CD4-positive, alpha-beta T cell (primary cell): ENCODE measurements at regions of chr1 and their contacts with region 1.

Region 1: GRCh38 chr1:111197598-111198284 is 2.7 kb downstream of the DENND2D start:
- DNase-seq: peak in 13 of 14 experiments; percentile 49 to 91 (median 73)
- ATAC-seq: no peak
- H3K4me3 ChIP-seq: peak overlapping the region; percentile 79
- H3K4me3 Mint-ChIP-seq: peak overlapping the region; percentile 99
- H3K27ac ChIP-seq: peak overlapping the region; percentile 70 to 97
- H3K27ac Mint-ChIP-seq: peak overlapping the region; percentile 90
- H3K4me1 ChIP-seq: peaks cover 86% of the 10 kb centered on the region
- H3K4me1 Mint-ChIP-seq: peaks cover 88% of the 10 kb centered on the region
- H3K27me3 ChIP-seq: no peaks in the 10 kb centered on the region
- H3K27me3 Mint-ChIP-seq: no peaks in the 10 kb centered on the region
- CTCF ChIP-seq: no peak

Region 2: DNA sequence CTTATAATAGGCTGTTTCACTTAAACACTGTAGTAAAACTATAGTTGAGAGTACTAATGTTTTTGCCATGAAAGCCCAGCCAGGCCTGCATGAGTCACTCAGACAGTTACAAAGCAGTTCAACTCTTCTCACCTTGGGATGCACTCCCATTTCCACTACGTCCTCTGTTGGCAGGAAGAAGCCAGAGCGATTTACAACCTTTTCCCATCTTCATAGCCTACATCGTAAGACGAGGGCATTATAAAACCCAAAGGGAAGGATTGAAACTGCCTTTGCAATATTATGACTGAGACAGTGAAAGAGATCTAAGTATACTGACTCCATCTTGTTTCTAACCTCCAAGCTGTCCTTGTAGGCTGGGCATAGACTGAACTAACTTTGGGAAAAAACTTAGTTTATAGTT is 1358.9 kb before region 1 on chr1:
- CTCF ChIA-PET with region 1: no interaction called
- POLR2A ChIA-PET with region 1: no interaction called
- intact Hi-C with region 1: no loop called
- DNase-seq: no peak
- ATAC-seq: no peak
- H3K4me3 ChIP-seq: no peak overlapping the region
- H3K4me3 Mint-ChIP-seq: no peak overlapping the region
- H3K27ac ChIP-seq: no peak overlapping the region
- H3K27ac Mint-ChIP-seq: no peak overlapping the region
- H3K4me1 ChIP-seq: no peaks in the 10 kb centered on the region
- H3K4me1 Mint-ChIP-seq: no peaks in the 10 kb centered on the region
- H3K27me3 ChIP-seq: no peaks in the 10 kb centered on the region
- H3K27me3 Mint-ChIP-seq: no peaks in the 10 kb centered on the region
- CTCF ChIP-seq: no peak

Region 3: GRCh38 chr1:110850636-110851035 is 347.1 kb before region 1 on chr1:
- CTCF ChIA-PET with region 1: no interaction called
- POLR2A ChIA-PET with region 1: no interaction called
- intact Hi-C with region 1: no loop called
- DNase-seq: no peak
- ATAC-seq: no peak
- H3K4me3 ChIP-seq: no peak overlapping the region
- H3K4me3 Mint-ChIP-seq: no peak overlapping the region
- H3K27ac ChIP-seq: no peak overlapping the region
- H3K27ac Mint-ChIP-seq: no peak overlapping the region
- H3K4me1 ChIP-seq: no peaks in the 10 kb centered on the region
- H3K4me1 Mint-ChIP-seq: no peaks in the 10 kb centered on the region
- H3K27me3 ChIP-seq: no peaks in the 10 kb centered on the region
- H3K27me3 Mint-ChIP-seq: peaks cover 7% of the 10 kb centered on the region
- CTCF ChIP-seq: no peak

Region 4: GRCh38 chr1:111183308-111184069 is 14.3 kb before region 1 on chr1:
- CTCF ChIA-PET with region 1: interaction called, 4 read pairs
- POLR2A ChIA-PET with region 1: interaction called, 106 read pairs
- intact Hi-C with region 1: no loop called
- DNase-seq: no peak
- ATAC-seq: no peak
- H3K4me3 ChIP-seq: no peak overlapping the region
- H3K4me3 Mint-ChIP-seq: no peak overlapping the region
- H3K27ac ChIP-seq: no peak overlapping the region
- H3K27ac Mint-ChIP-seq: peak overlapping the region; percentile 86
- H3K4me1 ChIP-seq: peaks cover 19% of the 10 kb centered on the region
- H3K4me1 Mint-ChIP-seq: peaks cover 94% of the 10 kb centered on the region
- H3K27me3 ChIP-seq: no peaks in the 10 kb centered on the region
- H3K27me3 Mint-ChIP-seq: no peaks in the 10 kb centered on the region
- CTCF ChIP-seq: no peak

Region 5: DNA sequence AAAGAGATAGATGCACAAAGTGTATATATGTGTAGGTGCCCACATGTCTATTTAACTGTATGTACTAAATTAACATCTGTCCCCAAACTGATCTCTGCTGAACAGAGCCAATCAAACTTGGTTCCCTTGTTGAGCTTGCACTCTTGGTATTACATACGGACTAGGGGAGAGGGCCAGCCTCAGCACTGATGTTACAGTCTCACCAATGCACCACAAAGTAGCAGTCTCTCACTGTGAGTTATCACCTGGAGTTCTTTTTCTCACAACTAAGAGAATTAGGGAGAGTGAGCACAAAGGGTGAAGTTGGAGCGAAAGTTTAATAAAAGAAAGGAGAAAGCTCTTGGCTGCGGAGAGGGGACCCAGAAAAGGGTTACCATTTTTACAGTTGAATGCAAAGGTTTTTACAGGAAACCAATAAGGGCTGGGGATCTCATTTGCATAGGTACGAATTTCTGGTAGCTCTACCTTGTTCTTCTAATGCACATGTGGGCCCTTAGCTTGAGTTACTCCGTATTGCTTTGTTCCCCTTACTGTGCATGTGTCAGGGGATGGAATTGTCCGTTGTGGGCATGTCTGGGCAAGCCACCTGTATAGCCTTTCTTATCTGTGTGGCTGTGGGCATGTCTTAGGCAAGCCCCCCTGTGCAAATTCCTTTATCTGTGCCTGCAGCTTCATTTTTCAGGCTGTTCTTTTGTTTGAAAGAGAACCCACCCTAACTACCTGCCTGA is 16.5 kb after region 1 on chr1:
- CTCF ChIA-PET with region 1: interaction called, 135 read pairs
- POLR2A ChIA-PET with region 1: interaction called, 756 read pairs
- intact Hi-C with region 1: loop called in 1 of 2 experiments (anchors 1 kb)
- DNase-seq: peak in 1 of 14 experiments; percentile 12
- ATAC-seq: no peak
- H3K4me3 ChIP-seq: no peak overlapping the region
- H3K4me3 Mint-ChIP-seq: peak overlapping the region; percentile 80
- H3K27ac ChIP-seq: peak overlapping the region; percentile 76 to 88
- H3K27ac Mint-ChIP-seq: peak overlapping the region; percentile 98
- H3K4me1 ChIP-seq: peaks cover 69% of the 10 kb centered on the region
- H3K4me1 Mint-ChIP-seq: peaks cover 94% of the 10 kb centered on the region
- H3K27me3 ChIP-seq: no peaks in the 10 kb centered on the region
- H3K27me3 Mint-ChIP-seq: peaks cover 5% of the 10 kb centered on the region
- CTCF ChIP-seq: no peak

Region 6: GRCh38 chr1:111234866-111235265 is 37.1 kb after region 1 on chr1:
- CTCF ChIA-PET with region 1: no interaction called
- POLR2A ChIA-PET with region 1: interaction called, 756 read pairs
- intact Hi-C with region 1: loop called in 1 of 2 experiments (anchors 5 kb)
- DNase-seq: no peak
- ATAC-seq: no peak
- H3K4me3 ChIP-seq: no peak overlapping the region
- H3K4me3 Mint-ChIP-seq: no peak overlapping the region
- H3K27ac ChIP-seq: no peak overlapping the region
- H3K27ac Mint-ChIP-seq: no peak overlapping the region
- H3K4me1 ChIP-seq: peaks cover 13% of the 10 kb centered on the region
- H3K4me1 Mint-ChIP-seq: peaks cover 70% of the 10 kb centered on the region
- H3K27me3 ChIP-seq: no peaks in the 10 kb centered on the region
- H3K27me3 Mint-ChIP-seq: no peaks in the 10 kb centered on the region
- CTCF ChIP-seq: no peak

Region 7: GRCh38 chr1:111334169-111334568 is 136.4 kb after region 1 on chr1:
- CTCF ChIA-PET with region 1: interaction called, 13 read pairs
- POLR2A ChIA-PET with region 1: no interaction called
- intact Hi-C with region 1: no loop called
- DNase-seq: peak; percentile 37 to 85 (median 52)
- ATAC-seq: peak; percentile 95
- H3K4me3 ChIP-seq: no peak overlapping the region
- H3K4me3 Mint-ChIP-seq: no peak overlapping the region
- H3K27ac ChIP-seq: no peak overlapping the region
- H3K27ac Mint-ChIP-seq: no peak overlapping the region
- H3K4me1 ChIP-seq: peaks cover 8% of the 10 kb centered on the region
- H3K4me1 Mint-ChIP-seq: peaks cover 6% of the 10 kb centered on the region
- H3K27me3 ChIP-seq: no peaks in the 10 kb centered on the region
- H3K27me3 Mint-ChIP-seq: no peaks in the 10 kb centered on the region
- CTCF ChIP-seq: peak; percentile 81

Region 8: GRCh38 chr1:111755331-111756123 is 557.8 kb after region 1 on chr1 and contains the start of gene DDX20:
- CTCF ChIA-PET with region 1: interaction called, 3 read pairs
- POLR2A ChIA-PET with region 1: no interaction called
- intact Hi-C with region 1: loop called in 1 of 2 experiments (anchors 5 kb)
- DNase-seq: peak; percentile 87 to 97 (median 92)
- ATAC-seq: peak; percentile 85
- H3K4me3 ChIP-seq: peak within 1 kb of the TSS; percentile 89
- H3K4me3 Mint-ChIP-seq: peak within 1 kb of the TSS; percentile 89
- H3K27ac ChIP-seq: peak within 1 kb of the TSS; percentile 89 to 95
- H3K27ac Mint-ChIP-seq: peak within 1 kb of the TSS; percentile 96
- H3K4me1 ChIP-seq: peaks cover 24% of the 10 kb centered on the region
- H3K4me1 Mint-ChIP-seq: peaks cover 45% of the 10 kb centered on the region
- H3K27me3 ChIP-seq: no peaks in the 10 kb centered on the region
- H3K27me3 Mint-ChIP-seq: no peaks in the 10 kb centered on the region
- CTCF ChIP-seq: peak; percentile 89
- total RNA-seq, gene DDX20: 27.2 to 27.4 TPM